Endothelial cell of umbilical vein (primary cell): ENCODE measurements at regions of chr7 and their contacts with region 1.

Region 1: GRCh38 chr7:26477381-26477990 is 185.8 kb downstream of the SNX10 start:
- DNase-seq: no peak
- H3K4me3 ChIP-seq: no peak overlapping the region
- H3K27ac ChIP-seq: no peak overlapping the region
- H3K4me1 ChIP-seq: no peaks in the 10 kb centered on the region
- H3K27me3 ChIP-seq: peaks cover 4 to 9% of the 10 kb centered on the region in 2 experiments
- CTCF ChIP-seq: no peak
- POLR2A ChIP-seq: no peak

Region 2: DNA sequence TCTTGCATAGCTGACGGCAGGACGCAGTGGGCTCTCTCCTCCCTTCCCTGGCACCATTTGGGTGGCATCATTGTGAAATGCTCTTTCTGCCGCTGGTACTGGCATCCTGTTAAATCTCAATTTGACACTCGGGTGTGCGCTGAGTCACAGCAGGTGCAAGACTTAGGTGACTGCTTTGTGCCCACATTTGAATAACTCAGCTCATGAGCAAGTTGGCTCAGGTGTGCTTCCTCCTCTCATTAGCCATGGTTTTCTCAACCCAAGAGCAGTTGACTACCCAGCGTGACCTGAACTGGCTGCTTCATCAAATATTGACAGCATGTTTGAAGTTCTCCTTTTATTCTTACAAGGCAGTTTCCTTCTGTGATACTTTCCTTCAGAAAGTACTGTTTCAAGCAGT is 350.1 kb before region 1 on chr7:
- CTCF ChIA-PET with region 1: no interaction called
- POLR2A ChIA-PET with region 1: interaction called, 10 read pairs
- dilution Hi-C with region 1: no loop called
- intact Hi-C with region 1: no loop called
- DNase-seq: no peak
- H3K4me3 ChIP-seq: no peak overlapping the region
- H3K27ac ChIP-seq: no peak overlapping the region
- H3K4me1 ChIP-seq: no peaks in the 10 kb centered on the region
- H3K27me3 ChIP-seq: peaks cover 4 to 9% of the 10 kb centered on the region in 2 experiments
- CTCF ChIP-seq: no peak
- POLR2A ChIP-seq: no peak